Cardiac septum (tissue), 1 donor: ENCODE measurements at regions of chr19 and their contacts with region 1.

Region 1: DNA sequence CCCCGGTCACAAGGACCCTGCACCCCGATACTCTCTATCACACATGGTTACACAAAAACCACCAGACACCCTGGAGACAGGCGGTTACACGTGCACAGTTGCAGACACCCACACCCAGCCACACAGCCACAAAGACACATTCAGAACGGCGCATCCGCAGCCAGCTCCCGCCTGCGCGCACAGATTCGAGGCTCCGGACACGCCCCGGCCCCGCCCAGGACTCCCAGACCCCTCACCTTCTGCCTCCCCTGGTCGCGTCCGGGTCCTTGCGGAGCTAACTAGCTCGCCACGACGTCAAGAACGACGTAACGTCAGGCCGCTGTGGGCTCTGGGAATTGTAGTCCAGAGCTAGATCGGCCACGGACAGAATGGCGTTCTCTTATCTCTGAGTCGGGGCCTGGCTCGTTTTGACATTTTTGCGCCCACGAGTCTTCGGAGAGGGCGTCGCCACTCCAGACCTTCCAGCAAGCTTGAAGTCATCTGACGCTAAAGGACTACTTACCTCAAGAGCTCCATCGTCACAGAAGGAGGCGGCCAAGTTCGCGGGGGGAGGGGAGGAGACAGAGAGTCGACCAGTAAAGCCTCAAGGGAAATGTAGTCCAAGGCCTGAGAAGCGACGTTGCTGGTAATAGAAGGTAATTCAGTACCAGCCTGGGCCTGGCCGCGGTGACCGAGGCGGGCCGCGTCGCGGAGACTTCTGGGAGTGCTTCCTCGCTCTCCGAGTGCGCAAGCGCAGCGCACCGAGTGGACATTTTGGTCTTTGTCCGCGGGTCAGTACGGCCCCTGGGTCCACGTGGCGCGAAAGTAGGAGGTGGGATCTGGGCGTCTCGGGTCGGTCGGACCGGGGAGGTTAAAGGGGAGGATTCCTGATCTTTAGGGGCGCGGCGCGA is at the starts of genes ZNF146 and ZNF565:
- DNase-seq: peak; percentile 99
- total RNA-seq, gene ZNF146: 38.6 TPM
- total RNA-seq, gene ZNF565: 4.0 TPM

Region 2: GRCh38 chr19:36489118-36489919 is 274.7 kb after region 1 on chr19 and contains the start of gene ZNF566:
- intact Hi-C with region 1: loop called (anchors 10 kb)
- DNase-seq: peak; percentile 92
- total RNA-seq, gene ZNF566: 8.3 TPM